ENCODE measurements at regions of chr4 and their contacts with region 1.

Region 1: GRCh38 chr4:83212041-83212851 is 72.4 kb downstream of the COQ2 start:
- DNase-seq: peak; percentile 44 to 76
- H3K4me3 ChIP-seq: no peak overlapping the region
- H3K27ac ChIP-seq: peak overlapping the region; percentile 51
- H3K4me1 ChIP-seq: peaks cover 39% of the 10 kb centered on the region
- H3K27me3 ChIP-seq: no peaks in the 10 kb centered on the region
- CTCF ChIP-seq: no peak

Region 2: DNA sequence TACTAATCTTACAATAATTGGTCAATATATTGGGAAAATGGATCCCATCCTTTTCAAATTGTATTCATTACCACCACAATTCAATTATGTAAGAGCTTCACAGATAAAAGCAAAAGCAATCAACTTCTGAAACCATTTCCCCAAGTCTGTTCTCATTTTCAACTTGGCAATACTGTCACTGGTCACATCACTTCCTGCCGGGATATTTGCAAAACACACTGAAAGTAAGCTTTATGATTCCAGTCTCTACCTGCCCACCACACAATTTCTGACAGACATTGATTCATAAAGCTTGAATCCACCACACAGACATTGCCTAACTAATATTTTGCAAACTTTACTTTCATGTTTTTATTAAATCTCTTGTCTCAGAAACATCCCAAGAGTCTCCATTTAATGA is 255.2 kb before region 1 on chr4:
- CTCF ChIA-PET with region 1: no interaction called
- POLR2A ChIA-PET with region 1: no interaction called
- intact Hi-C with region 1: no loop called
- DNase-seq: no peak
- H3K4me3 ChIP-seq: no peak overlapping the region
- H3K27ac ChIP-seq: no peak overlapping the region
- H3K4me1 ChIP-seq: no peaks in the 10 kb centered on the region
- H3K27me3 ChIP-seq: no peaks in the 10 kb centered on the region
- CTCF ChIP-seq: no peak

Region 3: DNA sequence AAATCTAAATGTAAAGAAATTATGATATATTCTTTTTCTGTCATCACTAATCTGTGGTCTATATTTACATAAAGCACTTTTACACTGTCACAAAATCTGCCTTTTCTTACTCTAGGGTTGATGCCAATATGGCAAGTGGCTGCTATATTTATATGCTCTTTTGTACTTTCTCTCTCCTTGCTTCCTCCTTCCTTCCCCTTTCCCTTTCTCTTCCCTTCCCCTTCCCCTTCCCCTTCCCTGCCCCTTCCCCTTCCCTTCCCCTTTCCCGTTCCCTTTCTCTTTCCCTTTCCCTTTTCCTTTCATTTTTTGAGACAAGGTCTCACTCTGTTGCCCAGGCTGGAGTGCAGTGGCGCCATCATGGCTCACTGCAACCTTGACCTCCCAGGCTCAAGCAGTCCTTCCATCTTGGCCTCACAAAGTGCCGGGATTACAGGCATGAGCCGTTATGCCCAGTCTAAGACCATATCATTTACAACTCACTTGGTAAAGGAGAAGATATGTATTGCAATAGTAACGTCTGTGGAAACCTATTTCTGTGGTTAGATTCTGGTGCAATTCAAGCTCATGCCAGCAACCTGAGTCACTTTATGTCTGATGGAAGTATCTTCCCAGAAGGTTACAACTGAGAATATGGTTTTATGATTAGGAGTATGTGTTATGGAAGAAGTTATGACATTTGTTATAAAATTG is 83.9 kb before region 1 on chr4:
- CTCF ChIA-PET with region 1: no interaction called
- POLR2A ChIA-PET with region 1: no interaction called
- intact Hi-C with region 1: loop called (anchors 5 kb)
- DNase-seq: peak; percentile 11 to 84
- H3K4me3 ChIP-seq: no peak overlapping the region
- H3K27ac ChIP-seq: no peak overlapping the region; the same call in none of the 2 replicates
- H3K4me1 ChIP-seq: peaks cover 9% of the 10 kb centered on the region
- H3K27me3 ChIP-seq: no peaks in the 10 kb centered on the region
- CTCF ChIP-seq: no peak

Region 4: DNA sequence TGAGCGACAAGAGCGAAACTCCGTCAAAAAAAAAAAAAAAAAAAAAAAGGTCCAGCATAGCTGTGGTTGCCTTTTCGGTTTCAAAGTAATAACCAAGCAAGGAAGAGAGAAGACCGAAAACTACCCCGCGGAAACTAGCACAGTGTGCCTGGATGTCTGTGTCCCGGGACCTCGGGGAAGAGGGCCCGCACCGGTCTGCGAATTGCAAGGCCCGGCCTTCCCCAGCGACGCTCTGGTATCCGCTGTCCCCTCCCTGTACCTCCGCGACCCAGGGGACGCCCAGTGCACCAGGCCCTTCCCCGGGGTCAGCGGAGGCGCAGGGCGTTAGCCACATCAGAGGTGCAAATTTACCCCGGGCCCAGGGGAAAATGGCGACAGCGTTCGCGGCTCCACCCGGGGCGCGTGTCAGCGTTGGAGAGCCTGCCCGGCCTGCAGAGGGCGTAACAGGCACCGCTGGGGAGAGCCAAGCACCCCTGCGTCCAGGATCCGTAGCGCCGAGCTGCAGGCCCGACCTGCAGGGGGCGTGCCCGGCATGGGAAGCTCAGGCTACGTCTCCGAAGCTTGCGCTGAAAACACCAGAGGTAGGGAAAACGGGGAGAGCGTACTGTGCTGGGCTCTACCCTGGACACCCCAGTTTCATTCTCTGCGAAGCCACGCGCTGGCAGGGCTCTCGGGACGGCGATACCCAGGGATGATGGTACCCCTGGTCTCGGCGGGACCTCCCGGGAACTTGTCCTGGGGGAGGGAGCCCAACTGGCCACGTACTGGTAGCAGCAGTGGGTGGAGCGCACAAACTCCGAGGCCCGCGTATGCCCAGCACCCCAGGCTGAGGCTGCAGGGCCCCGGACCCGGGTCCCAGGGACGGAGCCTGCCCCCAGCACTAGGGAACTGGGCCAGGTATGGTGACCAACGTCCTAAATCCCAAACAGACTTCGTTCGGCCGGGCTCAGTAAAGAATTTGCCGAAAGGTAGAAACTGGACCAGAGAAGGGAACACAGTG is 1270.6 kb after region 1 on chr4:
- CTCF ChIA-PET with region 1: no interaction called
- POLR2A ChIA-PET with region 1: no interaction called
- intact Hi-C with region 1: no loop called
- DNase-seq: no peak
- H3K4me3 ChIP-seq: no peak overlapping the region
- H3K27ac ChIP-seq: no peak overlapping the region
- H3K4me1 ChIP-seq: no peaks in the 10 kb centered on the region
- H3K27me3 ChIP-seq: no peaks in the 10 kb centered on the region
- CTCF ChIP-seq: no peak

Measured in PC-9 (cell line).